SK-N-SH (cell line): ENCODE measurements at regions of chr5 and their contacts with region 1.

Region 1: DNA sequence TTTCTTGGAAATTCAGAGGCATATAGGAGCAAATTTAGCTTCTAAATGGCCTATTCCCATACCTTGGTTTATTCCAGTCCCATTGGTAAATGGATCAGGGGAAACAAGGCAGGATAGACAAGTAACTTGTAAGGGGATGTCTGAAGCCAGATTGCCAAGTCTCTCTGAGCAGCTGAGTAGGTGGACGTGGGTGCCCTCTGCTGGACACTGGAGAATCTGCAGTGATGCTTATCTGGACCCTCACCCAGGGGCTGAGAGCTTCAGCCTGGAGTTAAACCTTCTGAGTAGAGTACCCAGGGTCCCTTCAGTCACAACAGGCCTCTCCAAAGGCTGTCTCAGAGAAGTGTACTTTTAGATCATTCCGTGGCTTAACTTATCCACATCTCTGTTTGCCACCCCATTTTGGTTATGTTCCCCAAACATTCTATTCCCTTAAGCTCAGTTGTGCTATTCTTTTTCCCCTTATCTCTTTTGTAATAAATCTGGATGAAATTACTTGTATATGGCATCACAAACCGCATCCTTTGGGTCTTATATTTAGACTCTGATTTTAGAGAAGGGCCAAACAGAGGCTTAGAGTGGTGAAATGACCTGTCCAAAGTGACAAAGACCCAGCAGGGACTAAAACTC is 218.3 kb upstream of the GLRA1 start:
- DNase-seq: peak; percentile 66
- H3K4me3 ChIP-seq: no peak overlapping the region
- H3K27ac ChIP-seq: no peak overlapping the region
- H3K4me1 ChIP-seq: no peaks in the 10 kb centered on the region
- H3K27me3 ChIP-seq: no peaks in the 10 kb centered on the region
- CTCF ChIP-seq: peak; percentile 90
- EP300 ChIP-seq: no peak
- RAD21 ChIP-seq: peak; percentile 77

Region 2: GRCh38 chr5:152124409-152125041 is 18.4 kb before region 1 on chr5:
- CTCF ChIA-PET with region 1: interaction called, 18 read pairs
- POLR2A ChIA-PET with region 1: no interaction called
- DNase-seq: no peak
- H3K4me3 ChIP-seq: no peak overlapping the region
- H3K27ac ChIP-seq: no peak overlapping the region
- H3K4me1 ChIP-seq: no peaks in the 10 kb centered on the region
- H3K27me3 ChIP-seq: no peaks in the 10 kb centered on the region; the same call in 1 of the 2 replicates
- CTCF ChIP-seq: no peak
- EP300 ChIP-seq: no peak
- RAD21 ChIP-seq: no peak

Region 3: GRCh38 chr5:152256580-152256979 is 113.6 kb after region 1 on chr5:
- CTCF ChIA-PET with region 1: no interaction called
- POLR2A ChIA-PET with region 1: no interaction called
- DNase-seq: no peak
- H3K4me3 ChIP-seq: no peak overlapping the region
- H3K27ac ChIP-seq: no peak overlapping the region
- H3K4me1 ChIP-seq: no peaks in the 10 kb centered on the region
- H3K27me3 ChIP-seq: no peaks in the 10 kb centered on the region
- CTCF ChIP-seq: no peak
- EP300 ChIP-seq: no peak
- RAD21 ChIP-seq: no peak